ENCODE measurements at regions of chr11 and their contacts with region 1.

Region 1: GRCh38 chr11:46295312-46296058 is 18.0 kb downstream of the CREB3L1 start:
- DNase-seq: peak; percentile 53 to 80 (median 66)
- H3K4me3 ChIP-seq: peak overlapping the region; percentile 55
- H3K4me3 Mint-ChIP-seq: peak overlapping the region; percentile 68 to 92 (median 81)
- H3K27ac ChIP-seq: peak overlapping the region; percentile 25
- H3K27ac Mint-ChIP-seq: peak overlapping the region in 1 of 8 donors; percentile 38
- H3K4me1 ChIP-seq: peaks cover 9% of the 10 kb centered on the region
- H3K4me1 Mint-ChIP-seq: peaks cover 6 to 12% (median 8%) of the 10 kb centered on the region in 3 donors
- H3K27me3 ChIP-seq: peaks cover 3% of the 10 kb centered on the region
- H3K27me3 Mint-ChIP-seq: peaks cover 16 to 29% of the 10 kb centered on the region in 2 donors

Region 2: GRCh38 chr11:46308631-46309419 is 13.3 kb after region 1 on chr11:
- CTCF ChIA-PET with region 1: interaction called, 20 read pairs
- POLR2A ChIA-PET with region 1: no interaction called
- DNase-seq: peak; percentile 36 to 73 (median 50)
- H3K4me3 ChIP-seq: no peak overlapping the region
- H3K4me3 Mint-ChIP-seq: no peak overlapping the region
- H3K27ac ChIP-seq: no peak overlapping the region
- H3K27ac Mint-ChIP-seq: no peak overlapping the region
- H3K4me1 ChIP-seq: peaks cover 4% of the 10 kb centered on the region
- H3K4me1 Mint-ChIP-seq: peaks cover 0 to 5% (median 5%) of the 10 kb centered on the region in 3 donors
- H3K27me3 ChIP-seq: no peaks in the 10 kb centered on the region
- H3K27me3 Mint-ChIP-seq: peaks cover 4 to 10% of the 10 kb centered on the region in 2 donors

Measured in CD8-positive, alpha-beta memory T cell (primary cell).